ENCODE measurements at regions of chr15 and their contacts with region 1.

Region 1: DNA sequence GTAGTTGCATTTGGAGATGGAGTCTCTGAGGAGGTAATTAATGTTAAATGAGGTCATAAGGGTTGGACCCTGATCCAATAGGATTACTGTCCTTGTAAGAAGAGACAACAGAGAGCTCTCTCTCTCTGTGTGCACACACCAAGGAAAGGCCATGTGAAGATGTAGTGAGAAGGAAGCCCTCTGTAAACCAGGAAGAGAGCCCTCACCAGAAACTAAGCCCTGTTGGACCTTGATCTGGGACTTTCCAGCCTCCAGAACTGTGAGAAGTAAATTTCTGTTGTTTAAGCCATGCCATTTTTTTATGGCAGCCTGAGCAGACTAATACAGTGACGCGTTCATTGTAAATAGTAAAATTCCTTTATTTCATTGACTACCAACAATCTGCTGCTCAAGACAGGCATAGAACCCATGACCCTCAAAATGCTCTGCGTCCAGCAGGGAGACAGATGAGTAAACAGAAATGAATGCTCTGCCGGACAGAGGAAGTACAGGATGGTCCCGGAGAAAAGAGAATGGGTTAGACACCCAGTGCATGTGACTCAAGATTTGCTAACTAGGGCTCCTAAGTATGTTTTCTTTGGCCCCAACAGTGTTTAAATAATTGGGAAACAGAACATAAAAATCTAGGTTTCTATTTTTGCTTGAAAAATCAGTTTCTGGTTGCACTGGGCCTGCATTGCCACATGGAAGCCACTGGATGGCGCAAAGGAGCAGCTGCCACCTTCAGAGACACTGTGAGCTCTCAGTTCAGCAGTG is 37.9 kb upstream of the TNFAIP8L3 start:
- DNase-seq: peak in 1 of 2 experiments; percentile 72
- H3K4me3 ChIP-seq: no peak overlapping the region
- H3K27ac ChIP-seq: no peak overlapping the region
- H3K4me1 ChIP-seq: peaks cover 0 to 3% (median 0%) of the 10 kb centered on the region in 4 experiments; a peak in 1 of 7 replicates
- H3K27me3 ChIP-seq: no peaks in the 10 kb centered on the region
- CTCF ChIP-seq: peak; percentile 88 to 97 (median 93)
- EP300 ChIP-seq: no peak
- POLR2A ChIP-seq: no peak
- RAD21 ChIP-seq: peak; percentile 75 to 80

Region 2: GRCh38 chr15:51097553-51098330 is 34.8 kb before region 1 on chr15:
- CTCF ChIA-PET with region 1: interaction called, 11 read pairs
- POLR2A ChIA-PET with region 1: no interaction called
- DNase-seq: no peak
- H3K4me3 ChIP-seq: no peak overlapping the region
- H3K27ac ChIP-seq: no peak overlapping the region
- H3K4me1 ChIP-seq: peaks cover 0 to 3% (median 0%) of the 10 kb centered on the region in 4 experiments; a peak in 2 of 7 replicates
- H3K27me3 ChIP-seq: peaks cover 16 to 33% (median 31%) of the 10 kb centered on the region in 4 experiments
- CTCF ChIP-seq: no peak
- EP300 ChIP-seq: no peak
- POLR2A ChIP-seq: no peak
- RAD21 ChIP-seq: no peak

Region 3: GRCh38 chr15:51121118-51121517 is 11.4 kb before region 1 on chr15:
- CTCF ChIA-PET with region 1: interaction called, 17 read pairs
- POLR2A ChIA-PET with region 1: no interaction called
- DNase-seq: no peak
- H3K4me3 ChIP-seq: no peak overlapping the region
- H3K27ac ChIP-seq: no peak overlapping the region
- H3K4me1 ChIP-seq: no peaks in the 10 kb centered on the region; a peak in 1 of 7 replicates
- H3K27me3 ChIP-seq: no peaks in the 10 kb centered on the region
- CTCF ChIP-seq: no peak
- EP300 ChIP-seq: no peak
- POLR2A ChIP-seq: no peak
- RAD21 ChIP-seq: no peak

Region 4: GRCh38 chr15:51155891-51156290 is 23.3 kb after region 1 on chr15:
- CTCF ChIA-PET with region 1: interaction called, 71 read pairs
- POLR2A ChIA-PET with region 1: no interaction called
- DNase-seq: no peak
- H3K4me3 ChIP-seq: no peak overlapping the region
- H3K27ac ChIP-seq: no peak overlapping the region
- H3K4me1 ChIP-seq: no peaks in the 10 kb centered on the region
- H3K27me3 ChIP-seq: no peaks in the 10 kb centered on the region
- CTCF ChIP-seq: no peak
- EP300 ChIP-seq: no peak
- POLR2A ChIP-seq: no peak
- RAD21 ChIP-seq: no peak

Region 5: GRCh38 chr15:51192521-51193280 is 60.1 kb after region 1 on chr15:
- CTCF ChIA-PET with region 1: interaction called, 31 read pairs
- POLR2A ChIA-PET with region 1: no interaction called
- DNase-seq: peak; percentile 87 to 100
- H3K4me3 ChIP-seq: no peak overlapping the region
- H3K27ac ChIP-seq: no peak overlapping the region
- H3K4me1 ChIP-seq: no peaks in the 10 kb centered on the region
- H3K27me3 ChIP-seq: no peaks in the 10 kb centered on the region
- CTCF ChIP-seq: peak; percentile 80 to 92 (median 88)
- EP300 ChIP-seq: no peak
- POLR2A ChIP-seq: no peak
- RAD21 ChIP-seq: peak; percentile 78 to 81

Measured in H1 (cell line).